Activated CD4-positive, alpha-beta T cell treated with anti-CD3 and anti-CD28 coated beads, Interleukin-2, amount 10 ng/mL, durations not matched to agents 7 days and 5 days (primary cell): ENCODE measurements at regions of chr16 and their contacts with region 1.

Region 1: DNA sequence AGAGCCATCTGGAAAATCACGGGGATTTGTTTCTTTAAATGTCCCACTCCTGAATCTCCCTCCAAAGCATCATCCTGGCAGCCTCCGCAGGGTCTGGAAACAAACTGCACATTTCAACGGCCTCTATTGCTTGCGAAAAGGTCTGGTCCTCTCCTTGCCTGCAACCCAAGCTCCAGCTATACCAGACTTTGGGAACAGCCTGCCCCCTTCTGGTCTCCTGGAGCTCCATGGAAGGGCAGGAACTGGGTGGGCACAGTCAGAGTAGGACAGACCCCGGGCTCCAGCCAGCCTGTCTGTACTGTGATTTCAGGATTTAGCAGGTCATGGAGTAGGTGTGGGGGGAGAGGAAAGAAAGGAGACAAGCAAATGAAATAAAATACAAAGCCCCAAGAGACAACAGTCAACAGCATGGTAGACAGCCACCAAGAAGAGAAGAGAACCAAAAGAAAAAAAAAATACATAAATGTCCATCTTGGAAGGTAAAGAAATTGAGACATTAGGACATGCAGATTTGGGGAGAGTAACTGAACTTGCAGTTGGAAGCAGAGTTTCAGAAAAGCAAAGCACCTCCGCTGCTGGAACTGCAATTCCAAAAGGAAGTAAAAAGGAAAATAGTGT is 2.7 kb downstream of the XYLT1 start:
- DNase-seq: peak; percentile 59
- H3K4me3 Mint-ChIP-seq: peak overlapping the region; percentile 89
- H3K27ac Mint-ChIP-seq: peak overlapping the region; percentile 51
- H3K4me1 Mint-ChIP-seq: peaks cover 55% of the 10 kb centered on the region
- H3K27me3 Mint-ChIP-seq: no peaks in the 10 kb centered on the region

Region 2: DNA sequence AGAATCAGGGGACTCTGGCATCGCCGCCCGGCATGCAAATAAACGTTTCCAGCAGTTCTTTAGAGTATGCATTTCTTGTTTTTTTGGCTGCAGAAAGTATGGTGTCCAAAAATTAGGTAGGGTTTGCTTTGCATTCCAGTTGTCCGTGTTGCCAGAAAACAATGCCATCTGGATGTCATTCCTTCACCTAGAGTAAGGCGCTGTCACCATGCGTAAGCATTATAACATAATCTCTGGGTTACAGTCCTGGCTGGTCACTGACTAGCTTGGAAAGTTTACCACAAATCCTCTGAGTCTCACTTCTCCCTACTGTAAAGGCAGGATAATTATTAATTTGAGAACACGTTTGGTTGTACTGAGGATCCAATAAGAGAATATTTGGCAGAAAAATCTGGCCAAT is 455.0 kb before region 1 on chr16:
- CTCF ChIA-PET with region 1: no interaction called
- POLR2A ChIA-PET with region 1: interaction called, 13 read pairs
- DNase-seq: no peak
- H3K4me3 Mint-ChIP-seq: no peak overlapping the region
- H3K27ac Mint-ChIP-seq: no peak overlapping the region
- H3K4me1 Mint-ChIP-seq: peaks cover 22% of the 10 kb centered on the region
- H3K27me3 Mint-ChIP-seq: peaks cover 17% of the 10 kb centered on the region

Region 3: GRCh38 chr16:17451843-17452242 is 16.2 kb before region 1 on chr16:
- CTCF ChIA-PET with region 1: no interaction called
- POLR2A ChIA-PET with region 1: no interaction called
- DNase-seq: peak; percentile 35
- H3K4me3 Mint-ChIP-seq: peak overlapping the region; percentile 1
- H3K27ac Mint-ChIP-seq: peak overlapping the region; percentile 82
- H3K4me1 Mint-ChIP-seq: peaks cover 66% of the 10 kb centered on the region
- H3K27me3 Mint-ChIP-seq: no peaks in the 10 kb centered on the region